Activated CD4-positive, alpha-beta memory T cell treated with anti-CD3 and anti-CD28 coated beads for 36 hours (primary cell): ENCODE measurements at regions of chr1 and their contacts with region 1.

Region 1: GRCh38 chr1:45018599-45019230 is 6.7 kb downstream of the UROD start:
- DNase-seq: peak; percentile 75
- H3K4me3 Mint-ChIP-seq: no peak overlapping the region
- H3K27ac Mint-ChIP-seq: no peak overlapping the region
- H3K4me1 Mint-ChIP-seq: peaks cover 12% of the 10 kb centered on the region
- H3K27me3 Mint-ChIP-seq: no peaks in the 10 kb centered on the region

Region 2: GRCh38 chr1:45033356-45033755 is 14.6 kb after region 1 on chr1:
- CTCF ChIA-PET with region 1: interaction called, 14 read pairs
- POLR2A ChIA-PET with region 1: interaction called, 3 read pairs
- intact Hi-C with region 1: no loop called
- DNase-seq: no peak
- H3K4me3 Mint-ChIP-seq: no peak overlapping the region
- H3K27ac Mint-ChIP-seq: no peak overlapping the region
- H3K4me1 Mint-ChIP-seq: peaks cover 5% of the 10 kb centered on the region
- H3K27me3 Mint-ChIP-seq: no peaks in the 10 kb centered on the region

Region 3: GRCh38 chr1:45230540-45230939 is 211.8 kb after region 1 on chr1:
- CTCF ChIA-PET with region 1: interaction called, 3 read pairs
- POLR2A ChIA-PET with region 1: no interaction called
- intact Hi-C with region 1: loop called (anchors 2 kb)
- DNase-seq: peak; percentile 14
- H3K4me3 Mint-ChIP-seq: no peak overlapping the region
- H3K27ac Mint-ChIP-seq: no peak overlapping the region
- H3K4me1 Mint-ChIP-seq: no peaks in the 10 kb centered on the region
- H3K27me3 Mint-ChIP-seq: no peaks in the 10 kb centered on the region

Region 4: GRCh38 chr1:45297604-45298356 is 279.1 kb after region 1 on chr1:
- CTCF ChIA-PET with region 1: interaction called, 259 read pairs
- POLR2A ChIA-PET with region 1: interaction called, 5 read pairs
- intact Hi-C with region 1: loop called (anchors 1 kb)
- DNase-seq: no peak
- H3K4me3 Mint-ChIP-seq: no peak overlapping the region
- H3K27ac Mint-ChIP-seq: no peak overlapping the region
- H3K4me1 Mint-ChIP-seq: peaks cover 2% of the 10 kb centered on the region
- H3K27me3 Mint-ChIP-seq: no peaks in the 10 kb centered on the region